Heart right ventricle (tissue), 16 donors: ENCODE measurements at regions of chr12 and their contacts with region 1.

Region 1: GRCh38 chr12:49967042-49967776 is 5.5 kb downstream of the AQP5 start:
- DNase-seq: peak; percentile 88 to 93
- ATAC-seq: peak; percentile 72 to 90 (median 84)
- H3K4me3 ChIP-seq: peak overlapping the region in 9 of 10 donors; percentile 26 to 50 (median 42)
- H3K27ac ChIP-seq: no peak overlapping the region
- H3K4me1 ChIP-seq: peaks cover 5 to 26% (median 9%) of the 10 kb centered on the region in 9 donors
- H3K27me3 ChIP-seq: peaks cover 0 to 69% (median 27%) of the 10 kb centered on the region in 7 donors
- CTCF ChIP-seq: peak; percentile 68 to 90 (median 78)

Region 2: GRCh38 chr12:49875115-49875720 is 92.0 kb before region 1 on chr12:
- intact Hi-C with region 1: no loop called
- DNase-seq: no peak
- ATAC-seq: no peak
- H3K4me3 ChIP-seq: no peak overlapping the region
- H3K27ac ChIP-seq: no peak overlapping the region
- H3K4me1 ChIP-seq: peaks cover 0 to 18% (median 2%) of the 10 kb centered on the region in 9 donors
- H3K27me3 ChIP-seq: no peaks in the 10 kb centered on the region
- CTCF ChIP-seq: no peak

Region 3: GRCh38 chr12:50055831-50056638 is 88.8 kb after region 1 on chr12:
- intact Hi-C with region 1: loop called (anchors 1 to 5 kb)
- DNase-seq: peak in 1 of 2 donors; percentile 26
- ATAC-seq: peak in 7 of 8 donors; percentile 44 to 73 (median 61)
- H3K4me3 ChIP-seq: no peak overlapping the region
- H3K27ac ChIP-seq: no peak overlapping the region
- H3K4me1 ChIP-seq: peaks cover 2 to 48% (median 20%) of the 10 kb centered on the region in 9 donors
- H3K27me3 ChIP-seq: peaks cover 0 to 39% (median 19%) of the 10 kb centered on the region in 7 donors
- CTCF ChIP-seq: peak; percentile 80 to 97 (median 95)

Region 4: GRCh38 chr12:50074936-50075807 is 108.0 kb after region 1 on chr12:
- intact Hi-C with region 1: loop called in 8 of 10 experiments (anchors 1 to 5 kb)
- DNase-seq: peak; percentile 84 to 85
- ATAC-seq: peak; percentile 84 to 92 (median 88)
- H3K4me3 ChIP-seq: no peak overlapping the region
- H3K27ac ChIP-seq: no peak overlapping the region
- H3K4me1 ChIP-seq: peaks cover 3 to 13% (median 6%) of the 10 kb centered on the region in 9 donors
- H3K27me3 ChIP-seq: no peaks in the 10 kb centered on the region
- CTCF ChIP-seq: peak; percentile 76 to 97 (median 94)

Region 5: DNA sequence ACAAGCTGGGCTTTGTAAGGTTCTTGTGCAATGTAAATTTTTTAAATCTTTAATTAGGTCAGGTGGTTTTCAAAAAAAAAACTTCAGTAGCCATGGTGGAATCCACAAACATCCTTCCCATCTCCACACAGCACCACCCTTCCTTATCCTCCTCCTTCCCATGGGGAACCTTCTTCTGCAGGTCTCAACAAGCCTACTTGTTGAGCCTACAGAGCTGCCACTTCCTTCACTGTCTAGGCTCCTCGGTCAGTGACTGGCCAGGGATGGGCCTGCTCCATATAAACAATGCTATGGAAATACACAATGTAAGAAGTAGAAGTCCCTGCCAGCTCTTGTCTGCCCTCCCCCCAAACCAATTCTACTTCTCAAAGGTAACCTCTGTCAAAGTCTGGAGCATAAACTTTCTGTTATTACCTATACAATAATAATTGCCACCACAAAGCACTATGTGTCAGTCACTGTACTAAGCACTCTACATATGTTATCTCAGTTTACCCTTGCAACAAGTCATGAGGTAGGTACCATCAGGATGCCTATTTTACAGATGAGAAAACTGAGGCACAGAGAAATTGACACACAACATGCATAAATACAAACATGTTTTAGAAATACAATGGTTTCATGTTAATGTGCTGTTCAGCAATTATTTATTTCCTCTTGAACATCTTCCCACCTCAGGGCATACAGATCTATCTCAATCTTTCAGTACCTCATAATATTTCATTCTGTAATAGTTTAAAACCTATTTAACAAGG is 298.7 kb after region 1 on chr12:
- intact Hi-C with region 1: loop called in 1 of 10 experiments (anchors 5 kb)
- DNase-seq: no peak
- ATAC-seq: peak in 3 of 8 donors; percentile 22 to 46 (median 31)
- H3K4me3 ChIP-seq: no peak overlapping the region
- H3K27ac ChIP-seq: peak overlapping the region in 1 of 10 donors; percentile 27
- H3K4me1 ChIP-seq: peaks cover 0 to 20% (median 7%) of the 10 kb centered on the region in 9 donors
- H3K27me3 ChIP-seq: no peaks in the 10 kb centered on the region
- CTCF ChIP-seq: no peak